H1 (cell line): ENCODE measurements at regions of chr1 and their contacts with region 1.

Region 1: GRCh38 chr1:237864338-237865244 is 26.1 kb downstream of the ZP4 start:
- DNase-seq: peak; percentile 41 to 92
- H3K4me3 ChIP-seq: no peak overlapping the region
- H3K27ac ChIP-seq: no peak overlapping the region
- H3K4me1 ChIP-seq: peaks cover 0 to 3% (median 2%) of the 10 kb centered on the region in 4 experiments; a peak in 2 of 7 replicates
- H3K27me3 ChIP-seq: peaks cover 4 to 10% (median 8%) of the 10 kb centered on the region in 4 experiments
- CTCF ChIP-seq: peak; percentile 94 to 95 (median 94)
- EP300 ChIP-seq: no peak
- POLR2A ChIP-seq: no peak
- RAD21 ChIP-seq: peak; percentile 97 to 98

Region 2: DNA sequence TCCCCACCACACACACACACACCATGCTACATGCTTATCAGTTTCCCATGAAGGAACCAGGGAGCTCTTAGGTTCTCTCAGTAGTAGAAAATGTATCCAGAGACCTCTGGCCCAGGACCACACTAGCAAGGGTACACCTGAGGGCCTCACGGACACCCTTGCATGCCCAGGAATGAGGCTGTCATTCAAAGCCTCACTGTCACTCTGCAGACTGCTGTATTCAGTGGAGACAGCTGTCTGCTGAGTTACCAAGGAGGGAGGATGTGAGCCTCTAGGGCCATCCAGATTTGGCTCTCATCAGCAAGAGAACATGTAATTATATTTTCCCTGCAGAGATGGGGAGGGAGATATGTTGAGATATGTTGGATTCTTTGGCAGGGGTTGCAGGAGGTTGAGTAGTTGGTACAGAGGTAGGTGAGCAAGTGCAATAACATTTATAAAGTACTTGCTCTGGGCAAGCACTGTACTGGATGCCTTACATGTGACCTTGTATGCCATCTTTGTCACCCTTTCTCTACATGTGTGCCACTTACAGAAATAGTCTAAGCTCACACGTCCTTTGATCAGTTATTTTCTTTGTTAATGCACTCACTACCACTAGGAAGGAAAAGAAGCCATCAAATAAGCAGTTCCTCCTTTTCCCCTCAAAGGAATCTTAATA is 224.4 kb before region 1 on chr1:
- CTCF ChIA-PET with region 1: no interaction called
- POLR2A ChIA-PET with region 1: no interaction called
- DNase-seq: no peak
- H3K4me3 ChIP-seq: no peak overlapping the region
- H3K27ac ChIP-seq: no peak overlapping the region
- H3K4me1 ChIP-seq: no peaks in the 10 kb centered on the region
- H3K27me3 ChIP-seq: no peaks in the 10 kb centered on the region
- CTCF ChIP-seq: no peak
- EP300 ChIP-seq: no peak
- POLR2A ChIP-seq: no peak
- RAD21 ChIP-seq: no peak

Region 3: DNA sequence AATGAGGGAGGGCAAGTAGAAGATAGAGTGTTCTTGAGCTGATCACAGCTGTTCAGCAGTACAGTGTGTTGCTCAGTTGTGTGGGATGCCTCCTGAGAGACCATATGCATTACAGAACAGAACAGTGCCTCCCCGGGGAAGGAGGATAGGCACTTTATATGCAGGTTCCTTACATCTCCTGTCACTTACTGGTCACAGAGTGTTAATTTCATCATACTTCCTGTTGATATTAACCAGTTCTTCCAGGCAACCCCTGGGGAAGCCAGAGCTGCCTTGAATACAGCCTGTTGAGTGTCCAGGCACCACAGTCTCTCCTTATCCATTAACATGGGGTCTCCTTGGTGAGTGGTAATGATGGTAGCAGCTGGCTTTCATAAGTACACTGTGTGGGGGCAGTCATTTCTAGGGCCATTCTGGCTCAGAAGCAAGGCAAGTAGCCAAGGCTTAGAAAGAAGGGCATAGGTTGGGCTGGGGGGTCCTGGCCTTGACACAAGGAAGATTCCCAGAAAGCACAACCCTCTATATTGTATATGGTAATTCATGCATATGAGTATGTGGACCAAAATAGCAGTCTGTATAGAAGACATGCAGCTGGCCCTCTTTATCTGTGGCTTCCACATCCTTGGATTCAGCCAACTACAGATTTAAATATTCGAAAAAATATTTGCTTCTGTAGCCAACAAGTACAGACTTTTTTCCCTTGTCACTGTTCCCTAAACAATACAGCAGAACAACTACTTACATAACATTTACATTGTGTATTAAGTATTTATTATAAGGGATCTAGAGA is 116.2 kb before region 1 on chr1:
- CTCF ChIA-PET with region 1: no interaction called
- POLR2A ChIA-PET with region 1: no interaction called
- DNase-seq: no peak
- H3K4me3 ChIP-seq: no peak overlapping the region
- H3K27ac ChIP-seq: no peak overlapping the region
- H3K4me1 ChIP-seq: peaks cover 0 to 3% (median 0%) of the 10 kb centered on the region in 4 experiments; a peak in 2 of 7 replicates
- H3K27me3 ChIP-seq: no peaks in the 10 kb centered on the region
- CTCF ChIP-seq: no peak
- EP300 ChIP-seq: no peak
- POLR2A ChIP-seq: no peak
- RAD21 ChIP-seq: no peak

Region 4: DNA sequence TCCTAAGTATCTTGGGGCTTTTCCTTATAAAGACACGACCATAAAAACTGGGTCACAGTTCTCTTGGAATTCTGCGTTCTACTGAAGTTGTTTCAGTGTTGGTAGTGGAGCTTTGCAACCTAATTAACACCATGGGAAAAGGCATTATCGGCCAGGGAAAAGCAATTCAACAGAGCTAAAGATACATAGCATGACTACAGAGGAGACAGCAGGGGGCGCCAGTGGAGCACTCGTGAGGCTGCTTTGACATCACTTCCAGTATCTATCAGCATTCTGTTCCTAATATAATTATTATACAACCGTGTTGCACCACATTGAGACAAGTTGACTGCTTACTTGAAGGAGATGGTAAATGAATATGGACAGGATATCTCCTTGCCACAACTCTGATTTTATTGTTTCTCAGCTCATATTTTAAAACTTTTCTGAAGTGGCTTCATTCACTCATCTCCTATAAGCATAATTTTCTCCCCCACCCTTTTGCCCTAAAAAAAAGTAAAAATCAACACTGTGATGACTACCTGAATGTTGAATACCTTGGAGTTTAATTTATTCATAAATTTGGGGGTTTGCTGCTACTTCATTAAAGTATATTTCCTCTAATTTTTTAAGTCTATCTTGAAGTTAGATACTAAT is 13.3 kb before region 1 on chr1:
- CTCF ChIA-PET with region 1: interaction called, 90 read pairs
- POLR2A ChIA-PET with region 1: no interaction called
- DNase-seq: peak; percentile 41 to 82
- H3K4me3 ChIP-seq: no peak overlapping the region
- H3K27ac ChIP-seq: no peak overlapping the region
- H3K4me1 ChIP-seq: peaks cover 0 to 3% (median 0%) of the 10 kb centered on the region in 4 experiments; a peak in 2 of 7 replicates
- H3K27me3 ChIP-seq: no peaks in the 10 kb centered on the region
- CTCF ChIP-seq: peak; percentile 66 to 87 (median 76)
- EP300 ChIP-seq: no peak
- POLR2A ChIP-seq: no peak
- RAD21 ChIP-seq: peak; percentile 88 to 90

Region 5: DNA sequence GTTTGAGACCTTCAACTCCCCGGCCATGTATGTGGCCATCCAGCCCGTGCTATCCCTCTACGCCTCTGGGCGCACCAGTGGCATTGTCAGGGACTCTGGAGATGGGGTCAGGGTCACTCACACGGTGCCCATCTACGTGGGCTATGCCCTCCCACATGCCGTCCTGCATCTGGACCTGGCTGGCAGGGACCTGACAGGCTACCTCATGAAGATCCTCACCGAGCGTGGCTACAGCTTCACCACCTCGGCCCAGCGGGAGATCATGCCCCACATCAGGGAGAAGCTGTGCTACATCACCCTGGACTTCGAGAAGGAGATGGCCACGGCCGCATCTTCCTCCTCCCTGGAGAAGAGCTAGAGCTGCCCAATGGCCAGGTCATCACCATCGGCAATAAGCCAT is 62.6 kb after region 1 on chr1:
- CTCF ChIA-PET with region 1: interaction called, 20 read pairs
- POLR2A ChIA-PET with region 1: no interaction called
- DNase-seq: no peak
- H3K4me3 ChIP-seq: no peak overlapping the region
- H3K27ac ChIP-seq: no peak overlapping the region
- H3K4me1 ChIP-seq: no peaks in the 10 kb centered on the region
- H3K27me3 ChIP-seq: no peaks in the 10 kb centered on the region
- CTCF ChIP-seq: no peak
- EP300 ChIP-seq: no peak
- POLR2A ChIP-seq: no peak
- RAD21 ChIP-seq: no peak

Region 6: DNA sequence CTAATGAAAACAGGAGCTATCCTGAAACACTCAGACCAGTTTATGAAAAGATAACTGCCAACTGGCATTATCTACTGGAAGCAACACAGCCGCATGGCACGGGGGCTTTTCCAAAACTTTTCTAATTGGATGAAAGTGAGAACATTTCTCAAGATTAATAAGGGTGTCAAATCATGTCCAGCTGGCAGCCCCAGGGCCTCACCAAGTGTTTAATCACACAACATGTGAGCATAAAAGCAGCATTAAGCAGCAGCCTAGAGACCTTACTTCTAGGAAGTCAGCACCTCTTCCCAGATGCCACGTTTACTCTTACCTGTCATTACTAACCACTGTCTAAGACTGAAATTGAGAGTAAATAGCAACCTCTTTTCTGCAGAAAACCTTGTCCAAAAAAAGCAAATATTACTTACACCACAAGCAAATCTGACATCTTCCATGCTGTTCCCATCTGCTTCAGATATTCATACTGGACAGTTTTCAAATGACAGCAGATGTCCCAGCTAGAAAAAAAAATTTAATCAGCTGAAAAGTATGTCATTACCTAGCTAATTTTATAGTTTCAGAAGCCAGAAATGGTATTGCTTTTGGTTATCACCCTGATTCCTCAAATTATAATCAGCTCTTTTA is 367.6 kb after region 1 on chr1:
- CTCF ChIA-PET with region 1: interaction called, 11 read pairs
- POLR2A ChIA-PET with region 1: no interaction called
- DNase-seq: no peak
- H3K4me3 ChIP-seq: no peak overlapping the region
- H3K27ac ChIP-seq: no peak overlapping the region
- H3K4me1 ChIP-seq: no peaks in the 10 kb centered on the region
- H3K27me3 ChIP-seq: no peaks in the 10 kb centered on the region
- CTCF ChIP-seq: no peak
- EP300 ChIP-seq: no peak
- POLR2A ChIP-seq: no peak
- RAD21 ChIP-seq: no peak

Region 7: GRCh38 chr1:238252033-238252802 is 387.6 kb after region 1 on chr1:
- CTCF ChIA-PET with region 1: interaction called, 13 read pairs
- POLR2A ChIA-PET with region 1: no interaction called
- DNase-seq: peak; percentile 60 to 86
- H3K4me3 ChIP-seq: no peak overlapping the region
- H3K27ac ChIP-seq: no peak overlapping the region
- H3K4me1 ChIP-seq: peaks cover 0 to 6% (median 5%) of the 10 kb centered on the region in 4 experiments; a peak in 4 of 7 replicates
- H3K27me3 ChIP-seq: no peaks in the 10 kb centered on the region
- CTCF ChIP-seq: peak; percentile 47 to 71 (median 71)
- EP300 ChIP-seq: peak in 1 of 2 experiments; percentile 58; a peak in 1 of 3 replicates
- POLR2A ChIP-seq: no peak
- RAD21 ChIP-seq: peak; percentile 74 to 84